Sigmoid colon (tissue), 7 donors: ENCODE measurements at regions of chr9 and their contacts with region 1.

Region 1: DNA sequence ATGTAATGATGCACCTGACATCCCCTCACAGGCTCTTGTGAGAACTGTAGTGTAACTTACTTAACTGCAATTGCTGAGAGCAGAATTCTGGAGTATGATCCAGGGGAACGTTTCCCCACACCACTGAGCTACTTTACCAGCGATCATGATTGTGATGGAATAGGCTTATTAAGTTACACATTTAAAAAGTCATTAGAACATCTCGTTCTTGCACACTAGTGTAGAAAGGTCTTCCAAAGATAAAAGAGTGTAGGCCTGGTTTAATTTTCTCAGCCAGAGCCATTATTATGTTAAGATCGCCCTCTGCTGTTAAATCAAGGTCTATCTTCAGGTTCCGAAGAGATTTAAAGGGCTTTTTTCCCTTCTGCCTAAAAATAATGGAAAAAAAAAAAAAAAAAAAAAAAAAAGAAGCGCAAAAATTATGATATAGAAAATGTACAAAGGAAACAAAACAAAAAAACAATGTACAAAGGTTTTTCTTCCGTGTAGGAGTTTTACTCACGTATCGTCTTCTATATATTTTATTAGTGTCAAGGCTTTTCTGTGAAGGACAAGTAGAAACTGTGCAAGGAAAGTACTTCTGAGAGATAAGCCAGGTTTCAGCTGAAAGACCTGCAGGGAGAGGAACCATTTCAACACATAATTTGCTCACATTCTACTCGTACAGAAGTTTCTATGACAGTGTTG is 18.6 kb upstream of the MOB3B start:
- DNase-seq: no peak
- H3K4me3 ChIP-seq: no peak overlapping the region
- H3K27ac ChIP-seq: peak overlapping the region in 3 of 4 donors; percentile 7 to 43 (median 24)
- H3K4me1 ChIP-seq: peaks cover 0 to 6% (median 4%) of the 10 kb centered on the region in 4 donors
- H3K27me3 ChIP-seq: no peaks in the 10 kb centered on the region
- CTCF ChIP-seq: peak; percentile 23 to 50 (median 46)
- EP300 ChIP-seq: no peak
- POLR2A ChIP-seq: no peak

Region 2: GRCh38 chr9:27033823-27034403 is 514.3 kb before region 1 on chr9:
- intact Hi-C with region 1: loop called (anchors 10 kb)
- DNase-seq: peak; percentile 67
- H3K4me3 ChIP-seq: no peak overlapping the region
- H3K27ac ChIP-seq: no peak overlapping the region
- H3K4me1 ChIP-seq: no peaks in the 10 kb centered on the region
- H3K27me3 ChIP-seq: no peaks in the 10 kb centered on the region
- CTCF ChIP-seq: peak; percentile 49 to 80 (median 71)
- EP300 ChIP-seq: no peak
- POLR2A ChIP-seq: no peak

Region 3: GRCh38 chr9:27125030-27125429 is 423.2 kb before region 1 on chr9:
- intact Hi-C with region 1: loop called (anchors 10 kb)
- DNase-seq: peak; percentile 93
- H3K4me3 ChIP-seq: no peak overlapping the region
- H3K27ac ChIP-seq: peak overlapping the region; percentile 58 to 76 (median 64)
- H3K4me1 ChIP-seq: peaks cover 0 to 32% (median 29%) of the 10 kb centered on the region in 4 donors
- H3K27me3 ChIP-seq: no peaks in the 10 kb centered on the region
- CTCF ChIP-seq: no peak
- EP300 ChIP-seq: peak in 3 of 4 donors; percentile 43 to 66 (median 63)
- POLR2A ChIP-seq: no peak

Region 4: GRCh38 chr9:27333241-27334052 is 214.8 kb before region 1 on chr9:
- intact Hi-C with region 1: loop called (anchors 1 kb)
- DNase-seq: peak; percentile 85
- H3K4me3 ChIP-seq: no peak overlapping the region
- H3K27ac ChIP-seq: peak overlapping the region in 1 of 4 donors; percentile 26
- H3K4me1 ChIP-seq: peaks cover 0 to 18% (median 16%) of the 10 kb centered on the region in 4 donors
- H3K27me3 ChIP-seq: no peaks in the 10 kb centered on the region
- CTCF ChIP-seq: peak; percentile 71 to 89 (median 78)
- EP300 ChIP-seq: peak in 1 of 4 donors; percentile 2
- POLR2A ChIP-seq: no peak

Region 5: DNA sequence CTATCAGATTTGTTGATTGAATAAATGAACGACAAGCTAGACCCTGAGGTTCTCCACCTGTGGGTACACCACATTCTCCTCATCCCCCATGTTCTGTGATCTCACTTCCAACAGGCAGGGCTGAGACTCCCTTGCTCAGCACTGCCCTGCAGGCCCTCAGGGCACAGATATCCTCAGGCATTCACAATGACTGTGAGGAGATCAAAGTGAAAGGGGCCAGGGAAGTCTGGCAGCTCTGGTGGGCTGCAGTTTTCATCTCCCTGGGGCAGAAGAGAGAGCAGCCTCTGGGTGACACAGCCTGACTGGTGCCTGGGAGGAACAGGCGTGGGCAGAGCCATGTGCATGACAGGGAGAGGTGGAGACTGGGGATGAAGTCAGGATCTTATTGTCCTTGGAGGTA is 167.5 kb after region 1 on chr9:
- intact Hi-C with region 1: no loop called
- DNase-seq: no peak
- H3K4me3 ChIP-seq: no peak overlapping the region
- H3K27ac ChIP-seq: no peak overlapping the region
- H3K4me1 ChIP-seq: no peaks in the 10 kb centered on the region
- H3K27me3 ChIP-seq: no peaks in the 10 kb centered on the region
- CTCF ChIP-seq: no peak
- EP300 ChIP-seq: no peak
- POLR2A ChIP-seq: no peak